Naive thymus-derived CD4-positive, alpha-beta T cell (primary cell): ENCODE measurements at regions of chr3 and their contacts with region 1.

Region 1: GRCh38 chr3:71130471-71131374 is 452.8 kb downstream of the FOXP1 start:
- DNase-seq: peak; percentile 33 to 90 (median 85)
- ATAC-seq: peak; percentile 86
- H3K4me3 ChIP-seq: peak overlapping the region; percentile 71
- H3K4me3 Mint-ChIP-seq: peak overlapping the region; percentile 85 to 99 (median 93)
- H3K27ac ChIP-seq: peak overlapping the region; percentile 89
- H3K27ac Mint-ChIP-seq: peak overlapping the region; percentile 94 to 99 (median 97)
- H3K4me1 ChIP-seq: peaks cover 42 to 51% of the 10 kb centered on the region in 2 donors
- H3K4me1 Mint-ChIP-seq: peaks cover 49 to 85% (median 80%) of the 10 kb centered on the region in 7 donors
- H3K27me3 ChIP-seq: no peaks in the 10 kb centered on the region
- H3K27me3 Mint-ChIP-seq: no peaks in the 10 kb centered on the region

Region 2: DNA sequence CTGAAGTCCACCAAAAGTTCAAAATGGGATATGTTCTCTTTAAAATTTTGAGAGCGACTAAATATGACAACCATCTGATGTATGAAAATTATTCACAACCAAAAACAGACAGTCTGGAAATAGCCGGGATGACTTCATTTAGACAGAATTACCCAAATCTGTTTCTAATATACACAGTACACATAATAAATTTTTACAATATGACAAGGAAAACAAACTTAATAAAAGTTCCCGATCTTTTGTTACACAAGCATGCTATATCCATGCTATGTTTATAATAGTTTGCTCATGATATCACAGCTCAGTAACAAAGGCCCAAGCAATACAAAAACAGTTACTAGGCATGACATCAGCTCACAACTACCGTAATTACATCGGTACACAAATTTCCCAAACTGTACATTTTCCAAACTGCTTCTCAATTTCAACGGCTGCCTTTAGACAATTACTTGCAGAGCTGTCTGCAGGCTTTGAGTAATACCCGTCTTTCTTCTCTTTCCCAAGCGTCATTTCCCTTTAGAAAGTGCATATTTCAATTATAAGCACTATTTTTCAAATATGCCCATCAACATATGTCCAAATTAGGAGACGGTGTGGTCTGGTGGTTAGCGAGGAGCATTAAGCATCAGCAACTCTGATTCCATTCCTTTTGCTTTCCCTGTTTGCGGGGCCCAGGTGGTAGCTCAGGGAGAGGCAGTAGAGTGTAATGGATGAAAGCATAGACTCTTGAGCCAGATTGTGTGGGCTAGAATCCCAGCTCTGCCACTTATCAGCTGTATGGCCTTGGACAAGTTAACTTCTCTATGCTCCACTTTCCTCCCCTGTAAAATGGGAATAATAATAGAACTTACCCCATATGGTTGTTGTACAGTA is 28.4 kb before region 1 on chr3:
- CTCF ChIA-PET with region 1: interaction called, 3 read pairs
- POLR2A ChIA-PET with region 1: no interaction called
- intact Hi-C with region 1: loop called in 1 of 2 experiments (anchors 2 kb)
- DNase-seq: no peak
- ATAC-seq: peak; percentile 26
- H3K4me3 ChIP-seq: no peak overlapping the region
- H3K4me3 Mint-ChIP-seq: peak overlapping the region in 7 of 10 donors; percentile 8 to 58 (median 30)
- H3K27ac ChIP-seq: no peak overlapping the region
- H3K27ac Mint-ChIP-seq: peak overlapping the region in 8 of 9 donors; percentile 52 to 93 (median 80)
- H3K4me1 ChIP-seq: peaks cover 33 to 57% of the 10 kb centered on the region in 2 donors
- H3K4me1 Mint-ChIP-seq: peaks cover 46 to 99% (median 88%) of the 10 kb centered on the region in 7 donors
- H3K27me3 ChIP-seq: no peaks in the 10 kb centered on the region
- H3K27me3 Mint-ChIP-seq: no peaks in the 10 kb centered on the region

Region 3: DNA sequence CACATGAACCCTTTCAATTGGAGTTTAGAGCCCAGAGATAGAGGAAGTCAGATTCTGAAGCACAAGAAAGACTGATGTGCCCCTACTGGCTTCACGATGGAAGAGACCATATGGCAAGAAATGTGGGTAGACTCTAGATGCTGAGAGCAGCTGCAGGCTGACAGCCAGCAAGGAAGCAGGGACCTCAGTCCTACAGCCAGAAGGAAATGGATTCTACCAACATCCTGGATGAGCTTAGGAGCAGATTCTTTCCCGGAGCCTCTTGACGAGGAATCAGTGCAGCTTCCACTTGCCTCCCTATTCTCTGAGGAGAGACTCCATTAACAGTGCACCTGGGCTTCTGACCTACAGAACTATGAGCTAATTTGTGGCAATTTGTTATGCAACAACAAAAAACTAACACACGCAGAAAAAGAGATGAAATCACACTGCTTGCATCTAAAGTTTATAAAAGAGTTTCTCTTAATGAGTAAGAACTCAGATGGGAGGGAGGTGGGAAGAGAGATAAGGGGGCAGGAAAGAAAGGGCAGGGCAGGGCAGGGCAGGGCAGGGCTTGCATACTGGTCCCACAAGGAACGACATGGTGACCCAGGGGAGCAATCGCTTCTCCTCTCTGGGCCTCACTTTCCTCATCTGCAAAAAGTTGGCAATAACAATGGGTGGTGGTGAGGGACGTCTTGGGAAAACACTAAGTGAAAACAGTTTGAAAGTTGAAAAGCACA is 11.9 kb after region 1 on chr3:
- CTCF ChIA-PET with region 1: interaction called, 3 read pairs
- POLR2A ChIA-PET with region 1: interaction called, 21 read pairs
- intact Hi-C with region 1: loop called in 1 of 2 experiments (anchors 1 kb)
- DNase-seq: peak in 3 of 9 donors; percentile 21 to 38 (median 31)
- ATAC-seq: peak; percentile 55
- H3K4me3 ChIP-seq: no peak overlapping the region
- H3K4me3 Mint-ChIP-seq: peak overlapping the region in 4 of 10 donors; percentile 5 to 50 (median 21)
- H3K27ac ChIP-seq: peak overlapping the region; percentile 10
- H3K27ac Mint-ChIP-seq: peak overlapping the region in 8 of 9 donors; percentile 75 to 94 (median 80)
- H3K4me1 ChIP-seq: peaks cover 0 to 10% of the 10 kb centered on the region in 2 donors
- H3K4me1 Mint-ChIP-seq: peaks cover 6 to 92% (median 83%) of the 10 kb centered on the region in 7 donors
- H3K27me3 ChIP-seq: no peaks in the 10 kb centered on the region
- H3K27me3 Mint-ChIP-seq: no peaks in the 10 kb centered on the region

Region 4: GRCh38 chr3:71160800-71161546 is 30.2 kb after region 1 on chr3:
- CTCF ChIA-PET with region 1: no interaction called
- POLR2A ChIA-PET with region 1: interaction called, 6 read pairs
- intact Hi-C with region 1: loop called in 1 of 2 experiments (anchors 2 kb)
- DNase-seq: no peak
- ATAC-seq: no peak
- H3K4me3 ChIP-seq: no peak overlapping the region
- H3K4me3 Mint-ChIP-seq: peak overlapping the region in 6 of 10 donors; percentile 5 to 69 (median 27)
- H3K27ac ChIP-seq: no peak overlapping the region
- H3K27ac Mint-ChIP-seq: peak overlapping the region in 8 of 9 donors; percentile 26 to 87 (median 72)
- H3K4me1 ChIP-seq: peaks cover 0 to 23% of the 10 kb centered on the region in 2 donors
- H3K4me1 Mint-ChIP-seq: peaks cover 6 to 92% (median 84%) of the 10 kb centered on the region in 7 donors
- H3K27me3 ChIP-seq: no peaks in the 10 kb centered on the region
- H3K27me3 Mint-ChIP-seq: no peaks in the 10 kb centered on the region

Region 5: GRCh38 chr3:71397046-71397445 is 266.3 kb after region 1 on chr3:
- CTCF ChIA-PET with region 1: no interaction called
- POLR2A ChIA-PET with region 1: no interaction called
- intact Hi-C with region 1: no loop called
- DNase-seq: no peak
- ATAC-seq: no peak
- H3K4me3 ChIP-seq: peak overlapping the region; percentile 3
- H3K4me3 Mint-ChIP-seq: peak overlapping the region in 9 of 10 donors; percentile 54 to 80 (median 73)
- H3K27ac ChIP-seq: peak overlapping the region; percentile 86
- H3K27ac Mint-ChIP-seq: peak overlapping the region in 8 of 9 donors; percentile 81 to 98 (median 92)
- H3K4me1 ChIP-seq: peaks cover 39 to 79% of the 10 kb centered on the region in 2 donors
- H3K4me1 Mint-ChIP-seq: peaks cover 23 to 95% (median 84%) of the 10 kb centered on the region in 7 donors
- H3K27me3 ChIP-seq: no peaks in the 10 kb centered on the region
- H3K27me3 Mint-ChIP-seq: peaks cover 0 to 52% (median 0%) of the 10 kb centered on the region in 5 donors

Region 6: GRCh38 chr3:71495708-71496472 is 365.2 kb after region 1 on chr3:
- CTCF ChIA-PET with region 1: no interaction called
- POLR2A ChIA-PET with region 1: interaction called, 8 read pairs
- intact Hi-C with region 1: loop called (anchors 1 to 2 kb)
- DNase-seq: peak in 2 of 9 donors; percentile 24 to 34
- ATAC-seq: no peak
- H3K4me3 ChIP-seq: peak overlapping the region; percentile 33
- H3K4me3 Mint-ChIP-seq: peak overlapping the region; percentile 52 to 98 (median 80)
- H3K27ac ChIP-seq: peak overlapping the region; percentile 89
- H3K27ac Mint-ChIP-seq: peak overlapping the region; percentile 77 to 100 (median 98)
- H3K4me1 ChIP-seq: peaks cover 43 to 71% of the 10 kb centered on the region in 2 donors
- H3K4me1 Mint-ChIP-seq: peaks cover 54 to 90% (median 85%) of the 10 kb centered on the region in 7 donors
- H3K27me3 ChIP-seq: no peaks in the 10 kb centered on the region
- H3K27me3 Mint-ChIP-seq: no peaks in the 10 kb centered on the region